PC-9 (cell line): ENCODE measurements at regions of chr5 and their contacts with region 1.

Region 1: DNA sequence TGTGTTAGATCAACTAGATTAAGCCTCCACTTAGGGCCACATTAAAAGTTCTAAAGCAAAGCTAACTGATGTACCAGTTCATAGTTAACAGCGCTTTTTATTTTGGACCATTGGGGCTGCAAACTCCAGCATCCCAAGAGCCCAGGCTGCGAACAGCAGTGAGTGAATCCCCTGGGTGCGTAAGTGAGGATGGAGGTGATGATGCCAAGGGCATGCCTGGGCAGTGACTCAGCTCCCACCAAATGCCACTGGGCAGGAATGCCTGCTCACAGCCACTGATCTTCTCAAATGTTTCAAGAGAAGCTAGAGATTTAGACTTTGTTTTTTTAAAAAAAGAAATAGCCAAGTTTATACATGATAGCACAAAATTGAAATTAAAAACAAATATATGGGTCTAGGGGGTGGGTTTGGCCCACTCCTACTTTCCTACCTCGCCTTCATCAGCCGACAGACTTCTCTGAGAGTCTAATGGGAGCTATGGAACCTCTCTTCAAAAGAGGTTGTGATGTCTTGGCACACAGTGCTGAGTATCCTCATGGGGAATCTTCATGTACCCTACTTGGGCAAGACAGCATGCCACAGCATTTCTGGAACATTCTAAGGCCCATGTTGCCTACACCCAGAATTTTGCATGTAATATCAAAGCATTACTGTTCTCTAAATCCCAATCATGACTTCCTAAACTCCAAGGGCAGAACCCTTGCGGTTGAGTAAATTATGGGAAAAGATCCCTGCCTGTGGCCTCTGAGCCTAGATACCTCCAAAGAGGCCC is 398.1 kb downstream of the EBF1 start:
- DNase-seq: no peak
- H3K4me3 ChIP-seq: no peak overlapping the region
- H3K27ac ChIP-seq: no peak overlapping the region
- H3K4me1 ChIP-seq: no peaks in the 10 kb centered on the region
- H3K27me3 ChIP-seq: peaks cover 43% of the 10 kb centered on the region
- CTCF ChIP-seq: no peak

Region 2: DNA sequence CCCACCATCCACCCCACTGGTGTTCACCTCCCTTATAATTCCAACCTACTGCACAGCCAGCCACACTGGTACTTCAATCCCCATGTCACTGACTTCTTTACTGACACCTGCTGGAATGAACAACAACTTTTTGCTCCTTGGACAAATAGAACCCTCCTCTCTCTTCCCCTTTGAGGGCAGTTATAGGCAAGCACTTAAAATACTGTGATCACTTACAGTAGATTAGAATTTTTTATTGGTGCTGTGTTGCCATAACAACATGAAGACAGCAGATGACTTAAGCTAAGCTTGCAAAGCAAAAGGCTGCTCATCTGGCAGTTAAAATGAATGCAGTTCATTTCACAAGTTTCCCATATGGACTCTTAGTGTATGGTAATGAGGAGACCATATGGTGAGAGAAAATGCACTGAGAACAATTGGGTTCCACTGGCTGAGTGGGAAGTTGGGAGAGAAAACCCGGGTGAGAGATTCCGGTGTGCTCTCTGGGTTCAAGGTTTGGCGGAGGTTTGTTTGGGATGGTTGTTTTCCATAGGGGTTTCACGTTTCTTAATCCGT is 23.8 kb after region 1 on chr5:
- CTCF ChIA-PET with region 1: no interaction called
- POLR2A ChIA-PET with region 1: interaction called, 23 read pairs
- intact Hi-C with region 1: no loop called
- DNase-seq: no peak
- H3K4me3 ChIP-seq: no peak overlapping the region
- H3K27ac ChIP-seq: no peak overlapping the region
- H3K4me1 ChIP-seq: no peaks in the 10 kb centered on the region
- H3K27me3 ChIP-seq: peaks cover 14% of the 10 kb centered on the region; the same call in 1 of the 2 replicates
- CTCF ChIP-seq: no peak